Posterior cingulate gyrus (tissue), 11 donors: ENCODE measurements at regions of chr6 and their contacts with region 1.

Region 1: GRCh38 chr6:4135665-4136353 is 434 bp upstream of the ECI2 start:
- DNase-seq: peak; percentile 95 to 100 (median 97)

Region 2: DNA sequence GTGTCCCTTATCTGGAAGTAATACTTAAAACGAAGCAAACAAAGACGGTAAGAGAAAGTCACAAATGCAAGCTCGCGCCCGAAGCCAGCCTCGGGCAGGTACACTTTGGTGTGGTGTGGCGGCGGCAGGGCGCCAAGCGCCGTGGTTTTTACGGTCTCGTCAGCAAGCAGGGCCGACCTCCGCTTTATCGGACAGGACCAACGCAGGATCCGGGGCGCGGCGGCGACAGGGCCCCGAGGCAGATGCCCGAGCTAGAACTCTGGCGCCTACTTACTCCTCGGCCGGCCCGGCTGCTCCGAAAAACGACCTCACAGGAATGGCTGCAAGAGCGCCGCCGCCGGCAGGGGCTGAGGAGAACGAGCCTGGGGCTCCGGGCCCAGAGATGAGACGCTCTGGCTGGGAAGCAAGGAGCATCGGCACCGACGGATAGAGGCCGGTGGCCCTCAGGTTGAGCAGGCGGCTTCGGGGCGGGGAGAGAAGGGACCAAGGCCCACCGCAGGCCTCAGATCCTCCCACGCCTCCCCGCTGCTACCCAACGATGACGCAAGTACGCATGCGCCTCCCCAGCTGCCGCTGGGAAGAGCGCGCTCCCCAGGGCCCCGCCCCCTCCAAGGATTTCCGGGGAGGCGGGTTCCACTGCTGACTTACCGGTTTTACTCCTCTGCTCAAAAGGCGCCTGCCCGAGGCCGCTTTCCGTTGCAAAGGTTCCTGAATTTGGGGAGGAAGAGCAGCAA is 117.5 kb before region 1 on chr6:
- intact Hi-C with region 1: loop called (anchors 1 kb)
- DNase-seq: peak; percentile 90 to 99 (median 92)